ENCODE measurements at regions of chr9 and their contacts with region 1.

Region 1: DNA sequence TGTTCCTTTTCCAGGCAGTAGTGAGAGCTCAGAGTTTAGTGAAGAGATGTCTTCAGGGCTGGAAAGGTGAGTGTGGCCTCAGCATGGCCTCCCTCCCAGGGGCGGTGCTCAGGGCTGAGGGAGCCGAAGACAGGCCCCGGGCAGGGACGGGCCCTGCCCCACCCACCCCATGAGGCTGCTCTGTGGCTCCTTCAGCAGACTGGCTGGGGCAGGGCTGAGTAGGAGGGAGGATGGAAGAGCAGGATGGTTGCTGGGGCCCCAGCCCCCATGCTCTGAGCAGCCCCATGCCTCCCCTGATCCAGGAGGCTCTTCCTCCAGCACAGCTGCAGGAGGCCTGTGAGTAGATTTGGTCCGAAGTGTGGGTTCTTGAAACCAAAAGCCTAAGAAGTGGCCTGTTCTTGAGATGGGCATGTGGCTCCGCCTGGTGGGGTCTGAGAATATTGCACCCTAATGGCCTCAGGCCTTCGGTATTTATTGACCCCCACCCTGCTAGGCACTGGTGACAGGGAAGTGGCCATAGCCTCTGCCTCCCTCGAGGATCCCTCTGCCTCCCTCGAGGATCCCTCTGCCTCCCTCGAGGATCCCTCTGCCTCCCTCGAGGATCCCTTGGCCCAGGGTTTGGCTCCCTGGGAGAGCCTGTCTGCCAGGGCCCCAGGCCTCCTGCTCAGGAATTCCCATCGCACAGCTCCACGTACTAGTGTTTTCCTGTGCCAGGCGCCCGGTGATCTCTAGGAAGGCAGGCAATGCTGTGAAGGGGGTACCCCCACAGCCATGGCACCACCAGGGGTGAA is 65.4 kb upstream of the GARNL3 start:
- DNase-seq: peak; percentile 84
- H3K4me3 ChIP-seq: no peak overlapping the region
- H3K27ac ChIP-seq: peak overlapping the region; percentile 26 to 74 (median 45)
- H3K4me1 ChIP-seq: peaks cover 12 to 22% (median 15%) of the 10 kb centered on the region in 4 donors
- H3K27me3 ChIP-seq: no peaks in the 10 kb centered on the region
- CTCF ChIP-seq: peak; percentile 91 to 98 (median 93)
- EP300 ChIP-seq: no peak
- POLR2A ChIP-seq: no peak

Region 2: GRCh38 chr9:126939821-126940221 is 259.4 kb before region 1 on chr9:
- in situ Hi-C with region 1: loop called (anchors 5 kb)
- intact Hi-C with region 1: loop called (anchors 1 kb)
- DNase-seq: no peak
- H3K4me3 ChIP-seq: no peak overlapping the region
- H3K27ac ChIP-seq: no peak overlapping the region
- H3K4me1 ChIP-seq: peaks cover 0 to 14% (median 0%) of the 10 kb centered on the region in 4 donors
- H3K27me3 ChIP-seq: no peaks in the 10 kb centered on the region
- CTCF ChIP-seq: no peak
- EP300 ChIP-seq: no peak
- POLR2A ChIP-seq: no peak

Region 3: GRCh38 chr9:126965541-126966428 is 233.4 kb before region 1 on chr9:
- in situ Hi-C with region 1: loop called in 1 of 4 experiments (anchors 10 kb)
- intact Hi-C with region 1: loop called (anchors 10 kb)
- DNase-seq: peak; percentile 25
- H3K4me3 ChIP-seq: no peak overlapping the region
- H3K27ac ChIP-seq: no peak overlapping the region
- H3K4me1 ChIP-seq: no peaks in the 10 kb centered on the region
- H3K27me3 ChIP-seq: no peaks in the 10 kb centered on the region
- CTCF ChIP-seq: peak; percentile 40 to 55 (median 48)
- EP300 ChIP-seq: no peak
- POLR2A ChIP-seq: no peak